ENCODE measurements at regions of chr3 and their contacts with region 1.

Region 1: DNA sequence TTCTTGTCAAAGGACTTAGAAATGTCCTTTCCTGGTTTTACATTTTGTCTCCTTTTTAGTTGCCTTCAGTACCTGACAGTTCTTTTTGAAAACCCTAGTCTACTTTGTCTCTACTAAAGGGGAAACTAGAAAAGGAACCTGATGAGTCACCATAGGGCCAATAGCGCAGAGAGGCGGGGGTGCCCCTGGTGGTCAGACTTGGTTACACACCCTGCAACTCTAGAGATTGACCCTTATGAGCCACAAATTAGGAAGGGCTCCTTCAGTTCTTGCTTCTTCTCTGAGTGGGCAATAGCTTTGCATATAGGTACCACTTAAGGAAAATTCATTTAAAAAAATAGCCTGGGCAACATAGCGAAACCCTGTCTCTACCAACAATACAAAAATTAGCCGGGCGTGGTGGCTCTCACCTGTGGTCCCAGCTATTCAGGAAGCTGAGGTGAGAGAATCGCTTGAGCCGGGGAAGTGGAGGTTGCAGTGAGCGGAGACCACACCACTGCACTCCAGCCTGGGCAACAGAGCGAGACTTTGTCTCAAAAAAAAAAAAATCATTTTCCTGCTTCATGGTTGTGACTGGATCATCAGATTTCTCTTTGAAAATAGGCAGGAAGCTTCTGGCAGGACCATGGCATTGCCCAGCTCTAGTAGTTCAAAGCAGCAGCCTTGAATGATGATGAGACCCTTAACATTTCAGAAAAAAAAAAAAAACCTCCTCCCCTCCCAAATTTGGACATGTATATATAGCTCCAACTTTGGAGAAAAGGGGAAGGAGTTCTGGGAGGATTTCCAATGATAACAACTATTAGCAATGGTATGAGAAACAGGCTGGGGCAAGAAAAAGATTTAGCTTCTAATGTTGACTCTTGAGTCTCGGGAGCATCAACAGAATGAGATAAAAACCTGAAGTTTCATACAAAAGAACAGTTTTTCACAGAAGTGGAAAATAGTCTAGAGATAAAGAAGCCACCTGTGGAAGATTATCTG is 45.2 kb upstream of the RASA2 start:
- DNase-seq: peak; percentile 93
- ATAC-seq: peak; percentile 100
- H3K4me3 Mint-ChIP-seq: no peak overlapping the region
- H3K27ac Mint-ChIP-seq: peak overlapping the region; percentile 87
- H3K4me1 Mint-ChIP-seq: peaks cover 29% of the 10 kb centered on the region
- H3K27me3 Mint-ChIP-seq: no peaks in the 10 kb centered on the region
- CTCF ChIP-seq: peak; percentile 92

Region 2: DNA sequence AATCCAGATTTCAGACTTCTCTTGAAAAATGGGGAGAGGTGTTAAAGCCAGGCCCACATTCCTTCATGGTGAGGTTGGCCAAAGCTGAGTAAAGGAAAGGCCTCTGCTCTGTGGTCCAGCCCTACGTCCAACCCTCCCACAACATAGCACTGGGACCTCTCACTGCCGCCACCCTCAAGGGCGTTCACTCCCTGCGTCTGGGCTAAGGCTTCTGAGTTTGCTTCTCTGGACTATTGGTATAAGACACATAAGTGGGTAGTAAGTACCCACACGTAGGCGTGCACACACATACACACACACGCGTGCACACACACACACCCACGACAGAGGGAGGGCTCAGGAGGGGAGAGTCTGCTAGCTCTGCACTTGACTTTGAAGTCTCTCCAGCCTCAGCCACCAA is 290.2 kb before region 1 on chr3:
- CTCF ChIA-PET with region 1: no interaction called
- POLR2A ChIA-PET with region 1: no interaction called
- intact Hi-C with region 1: no loop called
- DNase-seq: no peak
- ATAC-seq: no peak
- H3K4me3 Mint-ChIP-seq: no peak overlapping the region
- H3K27ac Mint-ChIP-seq: no peak overlapping the region
- H3K4me1 Mint-ChIP-seq: no peaks in the 10 kb centered on the region
- H3K27me3 Mint-ChIP-seq: no peaks in the 10 kb centered on the region
- CTCF ChIP-seq: no peak

Region 3: GRCh38 chr3:141164852-141165251 is 276.8 kb before region 1 on chr3:
- CTCF ChIA-PET with region 1: no interaction called
- POLR2A ChIA-PET with region 1: no interaction called
- intact Hi-C with region 1: no loop called
- DNase-seq: no peak
- ATAC-seq: no peak
- H3K4me3 Mint-ChIP-seq: no peak overlapping the region
- H3K27ac Mint-ChIP-seq: no peak overlapping the region
- H3K4me1 Mint-ChIP-seq: no peaks in the 10 kb centered on the region
- H3K27me3 Mint-ChIP-seq: peaks cover 4% of the 10 kb centered on the region
- CTCF ChIP-seq: no peak

Region 4: GRCh38 chr3:141303481-141304223 is 138.0 kb before region 1 on chr3:
- CTCF ChIA-PET with region 1: interaction called, 55 read pairs
- POLR2A ChIA-PET with region 1: interaction called, 3 read pairs
- intact Hi-C with region 1: no loop called
- DNase-seq: peak; percentile 74
- ATAC-seq: peak; percentile 35
- H3K4me3 Mint-ChIP-seq: no peak overlapping the region
- H3K27ac Mint-ChIP-seq: no peak overlapping the region
- H3K4me1 Mint-ChIP-seq: peaks cover 47% of the 10 kb centered on the region
- H3K27me3 Mint-ChIP-seq: no peaks in the 10 kb centered on the region
- CTCF ChIP-seq: peak; percentile 91

Region 5: GRCh38 chr3:141360888-141361598 is 80.6 kb before region 1 on chr3:
- CTCF ChIA-PET with region 1: interaction called, 82 read pairs
- POLR2A ChIA-PET with region 1: no interaction called
- intact Hi-C with region 1: no loop called
- DNase-seq: no peak
- ATAC-seq: peak; percentile 84
- H3K4me3 Mint-ChIP-seq: no peak overlapping the region
- H3K27ac Mint-ChIP-seq: no peak overlapping the region
- H3K4me1 Mint-ChIP-seq: peaks cover 5% of the 10 kb centered on the region
- H3K27me3 Mint-ChIP-seq: no peaks in the 10 kb centered on the region
- CTCF ChIP-seq: peak; percentile 77

Region 6: GRCh38 chr3:141380987-141381386 is 60.7 kb before region 1 on chr3:
- CTCF ChIA-PET with region 1: interaction called, 23 read pairs
- POLR2A ChIA-PET with region 1: no interaction called
- intact Hi-C with region 1: no loop called
- DNase-seq: no peak
- ATAC-seq: no peak
- H3K4me3 Mint-ChIP-seq: no peak overlapping the region
- H3K27ac Mint-ChIP-seq: no peak overlapping the region
- H3K4me1 Mint-ChIP-seq: peaks cover 27% of the 10 kb centered on the region
- H3K27me3 Mint-ChIP-seq: no peaks in the 10 kb centered on the region
- CTCF ChIP-seq: no peak

Region 7: GRCh38 chr3:141412087-141412935 is 29.4 kb before region 1 on chr3:
- CTCF ChIA-PET with region 1: interaction called, 14 read pairs
- POLR2A ChIA-PET with region 1: interaction called, 4 read pairs
- intact Hi-C with region 1: no loop called
- DNase-seq: peak; percentile 72
- ATAC-seq: peak; percentile 47
- H3K4me3 Mint-ChIP-seq: peak overlapping the region; percentile 75
- H3K27ac Mint-ChIP-seq: peak overlapping the region; percentile 98
- H3K4me1 Mint-ChIP-seq: peaks cover 79% of the 10 kb centered on the region
- H3K27me3 Mint-ChIP-seq: no peaks in the 10 kb centered on the region
- CTCF ChIP-seq: no peak

Region 8: GRCh38 chr3:141452036-141452435 is 10.4 kb after region 1 on chr3:
- CTCF ChIA-PET with region 1: interaction called, 80 read pairs
- POLR2A ChIA-PET with region 1: no interaction called
- intact Hi-C with region 1: no loop called
- DNase-seq: peak; percentile 63
- ATAC-seq: peak; percentile 75
- H3K4me3 Mint-ChIP-seq: no peak overlapping the region
- H3K27ac Mint-ChIP-seq: no peak overlapping the region
- H3K4me1 Mint-ChIP-seq: peaks cover 15% of the 10 kb centered on the region
- H3K27me3 Mint-ChIP-seq: no peaks in the 10 kb centered on the region
- CTCF ChIP-seq: peak; percentile 76

Region 9: DNA sequence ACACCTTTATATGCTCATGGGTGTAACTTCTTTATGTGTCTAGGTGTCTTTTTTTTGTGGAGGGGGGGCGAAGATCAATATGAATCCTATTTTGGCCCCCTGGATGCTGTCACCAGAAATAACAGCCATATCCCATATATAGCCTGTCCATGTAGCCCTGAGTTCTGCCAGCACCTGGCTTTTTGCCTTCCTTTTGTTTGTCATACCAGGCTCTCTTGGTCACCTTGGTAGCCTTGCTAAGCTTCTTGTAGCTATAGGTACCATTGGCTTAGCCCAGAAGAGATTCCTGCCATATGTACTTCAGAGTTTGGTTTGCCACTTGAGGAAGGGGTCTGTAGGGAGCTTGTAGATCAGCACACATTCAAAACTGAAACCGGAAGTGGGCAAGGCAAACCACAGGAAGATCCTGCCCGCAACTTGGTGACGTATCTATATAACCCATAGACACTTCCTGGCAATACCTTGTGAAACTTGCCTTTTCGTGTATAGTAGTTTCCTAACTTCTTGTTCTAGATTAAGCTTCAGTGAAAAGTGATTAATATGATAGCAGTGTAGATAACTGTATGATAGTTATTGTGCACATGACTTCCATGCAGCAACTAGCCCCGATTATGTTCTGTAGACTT is 57.0 kb after region 1 on chr3:
- CTCF ChIA-PET with region 1: no interaction called
- POLR2A ChIA-PET with region 1: no interaction called
- intact Hi-C with region 1: no loop called
- DNase-seq: peak; percentile 95
- ATAC-seq: peak; percentile 83
- H3K4me3 Mint-ChIP-seq: peak overlapping the region; percentile 63
- H3K27ac Mint-ChIP-seq: peak overlapping the region; percentile 97
- H3K4me1 Mint-ChIP-seq: peaks cover 67% of the 10 kb centered on the region
- H3K27me3 Mint-ChIP-seq: no peaks in the 10 kb centered on the region
- CTCF ChIP-seq: no peak